Caco-2 (cell line): ENCODE measurements at regions of chr2 and their contacts with region 1.

Region 1: GRCh38 chr2:26025509-26025908 is 8.4 kb upstream of the RAB10 start:
- DNase-seq: no peak
- H3K4me3 ChIP-seq: no peak overlapping the region
- H3K4me3 Mint-ChIP-seq: no peak overlapping the region
- H3K27ac Mint-ChIP-seq: no peak overlapping the region
- H3K4me1 ChIP-seq: no peaks in the 10 kb centered on the region
- H3K4me1 Mint-ChIP-seq: no peaks in the 10 kb centered on the region
- H3K27me3 ChIP-seq: no peaks in the 10 kb centered on the region
- H3K27me3 Mint-ChIP-seq: no peaks in the 10 kb centered on the region
- CTCF ChIP-seq: no peak

Region 2: DNA sequence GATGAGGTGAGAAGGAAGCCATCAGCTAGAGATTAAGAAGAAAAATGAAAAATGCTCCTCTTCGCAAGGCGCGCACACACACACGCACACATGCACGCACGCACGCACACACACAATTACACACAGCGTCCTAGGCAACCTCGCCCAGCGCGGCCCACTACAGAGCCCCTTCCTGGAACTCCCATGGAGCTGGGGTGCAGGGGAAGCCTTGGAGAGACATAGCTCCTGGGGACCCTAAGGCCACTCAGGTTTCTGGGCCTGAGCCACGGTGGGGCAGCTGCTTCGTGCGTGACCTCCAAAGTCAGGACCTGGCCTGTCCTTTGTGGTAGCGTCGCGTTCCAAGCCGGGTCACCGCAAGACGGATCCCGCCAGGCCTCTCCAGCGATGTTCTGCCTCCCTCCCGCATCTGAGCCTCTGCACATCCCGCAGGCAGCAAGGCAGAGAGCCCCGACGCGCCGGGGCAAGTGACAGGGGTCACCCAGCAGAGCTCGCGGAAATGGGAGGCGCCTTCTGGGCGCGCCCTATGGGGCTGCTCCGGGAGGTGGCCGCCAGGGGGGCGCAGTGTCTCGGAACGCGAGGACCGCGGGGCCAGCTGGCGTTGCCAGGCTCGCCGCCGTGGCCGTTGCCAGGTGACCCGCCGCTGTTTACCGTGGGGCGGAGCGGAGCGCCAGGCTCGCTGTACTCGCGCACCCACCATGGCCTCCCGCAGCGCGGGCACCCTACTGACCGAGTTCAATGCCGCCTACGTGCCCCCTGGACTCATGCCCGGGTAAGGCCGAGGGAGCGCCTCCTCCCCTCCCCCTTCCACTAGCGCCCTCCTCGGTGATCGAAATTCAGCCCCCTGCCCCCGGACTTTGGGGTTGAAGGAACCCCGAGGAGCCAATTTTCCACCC is 536.7 kb after region 1 on chr2:
- CTCF ChIA-PET with region 1: no interaction called
- POLR2A ChIA-PET with region 1: interaction called, 11 read pairs
- intact Hi-C with region 1: no loop called
- DNase-seq: peak; percentile 58 to 84
- H3K4me3 ChIP-seq: peak overlapping the region; percentile 41
- H3K4me3 Mint-ChIP-seq: peak overlapping the region; percentile 22
- H3K27ac Mint-ChIP-seq: no peak overlapping the region
- H3K4me1 ChIP-seq: 0 out of 2 replicates have a peak, but pooled peaks cover 4% of the 10 kb centered on the region
- H3K4me1 Mint-ChIP-seq: no peaks in the 10 kb centered on the region
- H3K27me3 ChIP-seq: no peaks in the 10 kb centered on the region
- H3K27me3 Mint-ChIP-seq: peaks cover 26% of the 10 kb centered on the region
- CTCF ChIP-seq: peak; percentile 45 to 57